Naive thymus-derived CD4-positive, alpha-beta T cell (primary cell): ENCODE measurements at regions of chr7 and their contacts with region 1.

Region 1: DNA sequence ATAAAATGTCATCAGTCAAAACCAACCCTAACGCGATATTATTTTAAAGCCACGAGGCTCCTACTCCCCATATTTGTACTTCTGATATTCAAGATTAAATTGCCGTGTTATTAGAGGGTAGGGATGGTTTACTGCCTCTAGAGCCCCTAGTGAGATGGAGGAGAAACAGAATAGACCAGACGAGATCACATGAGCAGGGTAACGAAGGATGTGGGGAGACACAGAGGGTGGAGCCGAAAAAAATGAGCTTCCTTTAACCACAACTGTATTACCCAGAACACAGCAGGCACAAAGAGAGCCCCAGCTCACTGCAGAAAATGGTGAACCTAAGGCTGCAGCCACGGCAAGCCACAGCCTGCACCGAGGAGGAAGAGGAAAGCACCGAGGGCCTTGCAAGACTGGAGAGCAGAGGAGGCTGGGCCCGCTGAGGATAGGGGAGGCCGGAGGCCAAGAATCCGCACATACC is 14.3 kb downstream of the ZC3HAV1 start:
- DNase-seq: peak; percentile 45 to 95 (median 93)
- ATAC-seq: peak; percentile 96
- H3K4me3 ChIP-seq: peak overlapping the region; percentile 84
- H3K4me3 Mint-ChIP-seq: peak overlapping the region; percentile 81 to 98 (median 88)
- H3K27ac ChIP-seq: peak overlapping the region; percentile 75
- H3K27ac Mint-ChIP-seq: peak overlapping the region; percentile 89 to 97 (median 94)
- H3K4me1 ChIP-seq: peaks cover 53 to 75% of the 10 kb centered on the region in 2 donors
- H3K4me1 Mint-ChIP-seq: peaks cover 60 to 100% (median 87%) of the 10 kb centered on the region in 7 donors
- H3K27me3 ChIP-seq: no peaks in the 10 kb centered on the region
- H3K27me3 Mint-ChIP-seq: peaks cover 0 to 3% (median 0%) of the 10 kb centered on the region in 5 donors

Region 2: GRCh38 chr7:138603549-138604318 is 491.5 kb before region 1 on chr7:
- CTCF ChIA-PET with region 1: no interaction called
- POLR2A ChIA-PET with region 1: no interaction called
- intact Hi-C with region 1: no loop called
- DNase-seq: no peak
- ATAC-seq: no peak
- H3K4me3 ChIP-seq: no peak overlapping the region
- H3K4me3 Mint-ChIP-seq: no peak overlapping the region
- H3K27ac ChIP-seq: no peak overlapping the region
- H3K27ac Mint-ChIP-seq: no peak overlapping the region
- H3K4me1 ChIP-seq: no peaks in the 10 kb centered on the region
- H3K4me1 Mint-ChIP-seq: peaks cover 0 to 23% (median 15%) of the 10 kb centered on the region in 7 donors
- H3K27me3 ChIP-seq: no peaks in the 10 kb centered on the region
- H3K27me3 Mint-ChIP-seq: peaks cover 0 to 7% (median 0%) of the 10 kb centered on the region in 5 donors

Region 3: GRCh38 chr7:139043823-139044812 is 51.1 kb before region 1 on chr7:
- CTCF ChIA-PET with region 1: interaction called, 3 read pairs
- POLR2A ChIA-PET with region 1: interaction called, 3 read pairs
- intact Hi-C with region 1: loop called in 1 of 2 experiments (anchors 1 kb)
- DNase-seq: peak in 5 of 9 donors; percentile 36 to 71 (median 40)
- ATAC-seq: peak; percentile 81
- H3K4me3 ChIP-seq: no peak overlapping the region
- H3K4me3 Mint-ChIP-seq: peak overlapping the region in 9 of 10 donors; percentile 4 to 87 (median 58)
- H3K27ac ChIP-seq: peak overlapping the region; percentile 50
- H3K27ac Mint-ChIP-seq: peak overlapping the region; percentile 48 to 89 (median 79)
- H3K4me1 ChIP-seq: peaks cover 36 to 38% of the 10 kb centered on the region in 2 donors
- H3K4me1 Mint-ChIP-seq: peaks cover 35 to 77% (median 67%) of the 10 kb centered on the region in 7 donors
- H3K27me3 ChIP-seq: no peaks in the 10 kb centered on the region
- H3K27me3 Mint-ChIP-seq: no peaks in the 10 kb centered on the region

Region 4: GRCh38 chr7:139109188-139109982 is 14.2 kb after region 1 on chr7 and contains the start of gene ZC3HAV1:
- CTCF ChIA-PET with region 1: interaction called, 26 read pairs
- POLR2A ChIA-PET with region 1: interaction called, 151 read pairs
- intact Hi-C with region 1: loop called (anchors 1 kb)
- DNase-seq: peak; percentile 68 to 94 (median 90)
- ATAC-seq: peak; percentile 91
- H3K4me3 ChIP-seq: peak within 1 kb of the TSS; percentile 80
- H3K4me3 Mint-ChIP-seq: peak within 1 kb of the TSS; percentile 92 to 100 (median 98)
- H3K27ac ChIP-seq: peak within 1 kb of the TSS; percentile 93
- H3K27ac Mint-ChIP-seq: peak within 1 kb of the TSS; percentile 96 to 100 (median 98)
- H3K4me1 ChIP-seq: peaks cover 13 to 22% of the 10 kb centered on the region in 2 donors
- H3K4me1 Mint-ChIP-seq: peaks cover 24 to 49% (median 42%) of the 10 kb centered on the region in 7 donors
- H3K27me3 ChIP-seq: no peaks in the 10 kb centered on the region
- H3K27me3 Mint-ChIP-seq: no peaks in the 10 kb centered on the region
- total RNA-seq, gene ZC3HAV1: 129 to 181 (median 152) TPM

Region 5: GRCh38 chr7:139124084-139124914 is 29.1 kb after region 1 on chr7:
- CTCF ChIA-PET with region 1: interaction called, 8 read pairs
- POLR2A ChIA-PET with region 1: interaction called, 42 read pairs
- intact Hi-C with region 1: loop called in 1 of 2 experiments (anchors 1 kb)
- DNase-seq: no peak
- ATAC-seq: no peak
- H3K4me3 ChIP-seq: no peak overlapping the region
- H3K4me3 Mint-ChIP-seq: peak overlapping the region in 2 of 10 donors; percentile 3 to 31
- H3K27ac ChIP-seq: no peak overlapping the region
- H3K27ac Mint-ChIP-seq: peak overlapping the region in 1 of 9 donors; percentile 43
- H3K4me1 ChIP-seq: peaks cover 1 to 20% of the 10 kb centered on the region in 2 donors
- H3K4me1 Mint-ChIP-seq: peaks cover 7 to 40% (median 25%) of the 10 kb centered on the region in 7 donors
- H3K27me3 ChIP-seq: no peaks in the 10 kb centered on the region
- H3K27me3 Mint-ChIP-seq: peaks cover 0 to 7% (median 0%) of the 10 kb centered on the region in 5 donors

Region 6: GRCh38 chr7:139359366-139360209 is 264.4 kb after region 1 on chr7 and contains the start of gene LUC7L2:
- CTCF ChIA-PET with region 1: no interaction called
- POLR2A ChIA-PET with region 1: interaction called, 8 read pairs
- intact Hi-C with region 1: loop called (anchors 1 kb)
- DNase-seq: peak; percentile 96 to 100 (median 99)
- ATAC-seq: peak; percentile 91
- H3K4me3 ChIP-seq: peak within 1 kb of the TSS; percentile 80
- H3K4me3 Mint-ChIP-seq: peak within 1 kb of the TSS; percentile 93 to 100 (median 99)
- H3K27ac ChIP-seq: peak within 1 kb of the TSS; percentile 97
- H3K27ac Mint-ChIP-seq: peak within 1 kb of the TSS; percentile 95 to 100 (median 98)
- H3K4me1 ChIP-seq: peaks cover 10 to 27% of the 10 kb centered on the region in 2 donors
- H3K4me1 Mint-ChIP-seq: peaks cover 21 to 60% (median 45%) of the 10 kb centered on the region in 7 donors
- H3K27me3 ChIP-seq: no peaks in the 10 kb centered on the region
- H3K27me3 Mint-ChIP-seq: no peaks in the 10 kb centered on the region
- total RNA-seq, gene LUC7L2: 116 to 183 (median 150) TPM